ENCODE measurements at regions of chr12 and their contacts with region 1.

Region 1: DNA sequence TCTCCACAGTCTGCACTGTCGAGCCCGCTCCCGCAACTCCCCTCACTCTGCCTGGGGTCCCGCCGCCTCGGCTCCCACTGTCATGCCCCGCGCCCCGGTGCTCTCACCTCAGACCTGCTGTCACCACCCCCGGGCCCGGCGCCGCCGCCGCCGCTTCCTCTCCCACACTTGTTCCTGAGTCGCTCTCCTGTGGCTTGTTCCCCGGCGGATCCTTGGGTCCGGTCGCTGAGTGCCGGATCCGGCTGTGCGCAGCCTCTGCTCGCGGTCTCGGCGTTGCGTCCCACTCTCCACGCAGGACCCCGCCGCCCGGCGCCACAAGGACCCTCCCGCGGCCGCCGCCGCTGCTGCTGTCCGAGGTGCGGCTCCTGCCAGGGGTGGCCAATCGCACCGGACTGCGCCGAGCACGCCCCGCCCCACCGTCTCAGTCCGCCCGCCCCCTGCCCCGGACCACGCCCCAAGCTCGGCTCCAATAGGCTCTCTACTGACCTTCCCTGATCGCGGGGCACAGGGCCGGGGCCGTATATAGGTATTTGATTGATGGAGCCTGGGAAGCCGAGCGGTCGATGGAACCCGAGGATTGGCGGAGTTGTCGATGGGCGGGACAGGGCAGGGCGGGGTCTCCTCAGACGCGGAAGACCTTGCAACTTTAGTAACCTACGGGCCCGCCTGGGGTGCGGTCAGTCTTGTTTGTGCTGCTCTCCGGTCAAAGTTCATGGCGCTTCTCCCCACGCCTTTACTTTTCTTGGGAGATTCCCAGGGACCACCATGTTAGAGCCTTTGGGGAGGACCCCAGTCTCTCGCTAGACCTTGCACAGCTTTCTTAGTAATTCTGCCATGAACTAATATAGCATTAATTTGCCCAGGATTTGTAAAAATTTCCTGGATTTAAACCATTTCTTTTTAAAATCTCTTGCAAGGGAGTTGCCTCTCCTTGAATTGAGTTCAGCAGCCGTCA is at the start of gene TAOK3:
- DNase-seq: peak; percentile 100
- H3K4me3 ChIP-seq: peak within 1 kb of the TSS; percentile 74 to 94 (median 86)
- H3K27ac ChIP-seq: peak within 1 kb of the TSS; percentile 83 to 95 (median 92)
- H3K4me1 ChIP-seq: peaks cover 0 to 58% (median 42%) of the 10 kb centered on the region in 4 donors
- H3K27me3 ChIP-seq: no peaks in the 10 kb centered on the region
- CTCF ChIP-seq: no peak
- EP300 ChIP-seq: peak in 1 of 4 donors; percentile 20
- POLR2A ChIP-seq: peak; percentile 82 to 89
- total RNA-seq, gene TAOK3: 18.9 to 66.2 (median 31.6) TPM

Region 2: GRCh38 chr12:117874842-117875434 is 497.9 kb before region 1 on chr12:
- intact Hi-C with region 1: loop called (anchors 5 kb)
- DNase-seq: peak; percentile 76
- H3K4me3 ChIP-seq: no peak overlapping the region
- H3K27ac ChIP-seq: no peak overlapping the region
- H3K4me1 ChIP-seq: no peaks in the 10 kb centered on the region
- H3K27me3 ChIP-seq: peaks cover 0 to 32% (median 26%) of the 10 kb centered on the region in 3 donors
- CTCF ChIP-seq: peak; percentile 50 to 85 (median 81)
- EP300 ChIP-seq: no peak
- POLR2A ChIP-seq: no peak

Region 3: DNA sequence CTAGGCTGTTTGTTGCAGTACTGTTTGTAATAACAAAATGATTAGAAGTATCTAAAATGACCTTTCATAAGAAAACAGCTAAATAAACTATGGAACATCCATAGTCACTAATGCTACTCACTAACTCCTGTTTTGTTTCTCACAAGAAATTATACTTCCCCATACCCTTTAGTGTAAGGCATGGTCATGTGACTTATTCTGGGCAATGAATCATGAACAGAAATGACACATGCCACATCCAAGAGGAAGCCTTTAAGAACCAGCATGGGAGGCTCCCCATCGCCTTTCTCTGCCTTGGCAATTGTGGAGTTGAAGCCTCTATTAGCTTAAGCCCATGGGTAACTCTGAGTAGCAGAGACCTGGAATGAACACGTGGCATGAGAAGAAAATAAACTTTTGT is 453.3 kb before region 1 on chr12:
- intact Hi-C with region 1: no loop called
- DNase-seq: no peak
- H3K4me3 ChIP-seq: no peak overlapping the region
- H3K27ac ChIP-seq: no peak overlapping the region
- H3K4me1 ChIP-seq: no peaks in the 10 kb centered on the region
- H3K27me3 ChIP-seq: no peaks in the 10 kb centered on the region
- CTCF ChIP-seq: no peak
- EP300 ChIP-seq: no peak
- POLR2A ChIP-seq: no peak

Region 4: DNA sequence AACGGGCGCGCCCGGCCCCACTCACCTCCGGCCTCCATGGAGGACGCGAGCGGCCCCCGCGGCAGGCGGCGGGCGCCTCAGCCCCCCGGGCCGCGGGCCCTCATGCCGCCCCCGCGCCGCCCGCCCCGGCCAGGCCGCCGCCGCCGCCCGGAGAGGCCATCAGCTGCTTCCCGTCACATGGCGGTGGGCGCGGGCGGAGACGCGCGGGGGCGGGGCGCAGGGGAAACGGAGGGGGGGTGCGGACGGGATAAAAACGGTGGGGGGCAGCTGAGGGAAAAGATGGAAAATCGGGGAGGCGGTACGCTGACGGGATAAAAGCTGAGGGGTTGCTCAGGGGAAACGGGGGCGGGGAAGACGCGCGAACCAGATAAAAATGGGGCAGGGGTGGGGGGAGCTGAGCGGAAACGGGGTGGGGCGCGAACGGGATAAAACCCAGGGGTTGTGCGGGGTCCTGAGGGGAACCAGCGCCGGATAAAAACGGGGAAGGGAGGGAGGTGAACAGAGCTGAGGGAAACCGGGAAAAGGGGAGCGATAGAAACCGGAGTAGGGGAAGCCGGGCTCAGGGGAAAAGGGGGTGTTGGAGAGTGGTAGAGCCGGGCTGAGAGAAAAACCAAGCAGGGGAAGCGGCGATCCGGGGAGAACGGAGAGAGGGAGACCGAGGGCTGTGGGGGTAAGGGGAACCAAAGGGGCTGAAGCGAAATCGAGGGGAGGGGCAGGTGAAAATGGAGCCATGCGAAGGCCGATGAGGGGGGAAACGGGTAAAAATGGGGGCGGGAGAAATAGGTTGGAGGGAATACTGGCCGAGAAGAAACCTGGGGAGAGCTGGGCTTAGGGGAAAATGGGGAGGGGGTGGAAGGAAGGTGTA is 311.6 kb before region 1 on chr12 and contains the start of gene WSB2:
- intact Hi-C with region 1: loop called (anchors 5 kb)
- DNase-seq: peak; percentile 86
- H3K4me3 ChIP-seq: peak within 1 kb of the TSS; percentile 81 to 89 (median 84)
- H3K27ac ChIP-seq: peak within 1 kb of the TSS; percentile 94 to 98 (median 98)
- H3K4me1 ChIP-seq: peaks cover 0 to 38% (median 32%) of the 10 kb centered on the region in 4 donors
- H3K27me3 ChIP-seq: no peaks in the 10 kb centered on the region
- CTCF ChIP-seq: no peak
- EP300 ChIP-seq: no peak
- POLR2A ChIP-seq: no peak
- total RNA-seq, gene WSB2: 50.2 to 64.0 (median 55.6) TPM

Region 5: GRCh38 chr12:118135788-118136558 is 236.8 kb before region 1 on chr12 and contains the start of gene PEBP1:
- intact Hi-C with region 1: loop called (anchors 5 kb)
- DNase-seq: peak; percentile 97
- H3K4me3 ChIP-seq: peak within 1 kb of the TSS; percentile 89 to 99 (median 93)
- H3K27ac ChIP-seq: peak within 1 kb of the TSS; percentile 88 to 98 (median 91)
- H3K4me1 ChIP-seq: peaks cover 0 to 23% (median 20%) of the 10 kb centered on the region in 4 donors
- H3K27me3 ChIP-seq: no peaks in the 10 kb centered on the region
- CTCF ChIP-seq: no peak
- EP300 ChIP-seq: no peak
- POLR2A ChIP-seq: peak; percentile 73 to 78
- total RNA-seq, gene PEBP1: 202 to 339 (median 292) TPM

Region 6: DNA sequence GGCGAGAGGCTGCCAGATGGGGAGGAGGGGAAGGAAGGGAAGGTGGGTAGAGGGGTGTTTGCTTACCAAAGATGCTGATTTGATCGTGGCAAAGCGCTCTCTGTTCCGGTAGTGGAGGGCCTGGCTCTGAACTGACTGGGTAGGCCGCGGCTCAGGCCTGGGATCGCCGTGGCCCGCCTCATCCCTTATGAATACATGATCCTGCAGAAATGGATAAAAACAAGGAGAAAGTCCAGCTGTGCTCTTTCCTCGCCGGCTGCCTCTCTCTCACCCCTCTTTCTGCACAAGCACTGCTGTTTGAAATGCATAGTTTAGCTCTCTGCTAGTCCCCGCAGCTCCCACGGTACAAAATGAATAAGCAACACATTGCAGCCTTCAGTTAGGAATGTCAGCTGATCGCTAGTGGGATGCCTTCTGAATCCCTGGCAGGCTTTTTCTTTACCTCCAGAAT is 183.1 kb before region 1 on chr12:
- intact Hi-C with region 1: loop called (anchors 2 kb)
- DNase-seq: peak; percentile 65
- H3K4me3 ChIP-seq: peak overlapping the region; percentile 18 to 50 (median 45)
- H3K27ac ChIP-seq: peak overlapping the region; percentile 79 to 85 (median 82)
- H3K4me1 ChIP-seq: peaks cover 0 to 39% (median 19%) of the 10 kb centered on the region in 4 donors
- H3K27me3 ChIP-seq: no peaks in the 10 kb centered on the region
- CTCF ChIP-seq: no peak
- EP300 ChIP-seq: no peak
- POLR2A ChIP-seq: no peak

Region 7: DNA sequence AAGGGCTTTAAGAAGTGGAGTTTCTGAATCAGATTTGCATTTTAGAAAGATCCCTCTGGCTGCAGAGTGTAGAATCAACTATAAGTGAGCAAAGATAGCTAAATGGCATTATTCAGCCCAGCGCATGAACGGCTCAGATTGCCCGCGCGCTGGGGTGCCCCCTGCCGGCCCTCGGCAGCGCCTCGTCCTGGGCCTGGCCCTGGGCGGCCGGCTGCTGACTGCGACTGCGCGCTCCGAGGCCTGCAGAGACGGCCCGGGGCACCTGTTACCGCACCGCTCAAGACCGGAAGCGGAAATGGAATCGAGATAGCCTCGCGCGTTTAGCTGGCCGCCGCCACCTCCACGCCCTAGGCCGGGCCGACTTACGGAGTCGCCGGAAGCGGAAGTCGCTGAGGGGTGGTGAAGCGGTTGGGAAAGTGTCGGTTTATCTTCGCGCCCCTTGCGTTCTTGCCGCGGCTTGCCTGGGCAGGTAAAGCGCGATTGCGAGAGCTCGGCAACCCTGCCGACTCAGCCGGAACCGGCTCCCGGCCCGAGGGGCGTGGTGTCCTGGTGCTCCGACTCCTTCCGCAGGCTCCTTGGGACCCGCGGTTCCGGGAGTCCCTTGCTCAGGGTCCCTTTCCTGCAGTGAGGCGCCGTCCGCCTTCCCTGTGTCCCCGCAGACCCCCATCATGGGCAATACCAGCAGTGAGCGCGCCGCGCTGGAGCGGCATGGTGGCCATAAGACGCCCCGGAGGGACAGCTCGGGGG is 1294.9 kb after region 1 on chr12 and contains the start of gene PRKAB1:
- intact Hi-C with region 1: loop called (anchors 5 kb)
- DNase-seq: peak; percentile 98
- H3K4me3 ChIP-seq: peak within 1 kb of the TSS; percentile 78 to 88 (median 82)
- H3K27ac ChIP-seq: peak within 1 kb of the TSS; percentile 89 to 96 (median 94)
- H3K4me1 ChIP-seq: peaks cover 0 to 26% (median 20%) of the 10 kb centered on the region in 4 donors
- H3K27me3 ChIP-seq: no peaks in the 10 kb centered on the region
- CTCF ChIP-seq: peak; percentile 51 to 90 (median 78)
- EP300 ChIP-seq: no peak
- POLR2A ChIP-seq: peak; percentile 50 to 89
- total RNA-seq, gene PRKAB1: 18.5 to 44.3 (median 19.7) TPM

Measured in sigmoid colon (tissue), 7 donors.